ENCODE measurements at regions of chr3 and their contacts with region 1.

Region 1: GRCh38 chr3:149042789-149043386 is 43.4 kb downstream of the HLTF start:
- DNase-seq: no peak
- H3K4me3 ChIP-seq: no peak overlapping the region
- H3K27ac ChIP-seq: no peak overlapping the region
- H3K4me1 ChIP-seq: no peaks in the 10 kb centered on the region
- CTCF ChIP-seq: no peak

Region 2: DNA sequence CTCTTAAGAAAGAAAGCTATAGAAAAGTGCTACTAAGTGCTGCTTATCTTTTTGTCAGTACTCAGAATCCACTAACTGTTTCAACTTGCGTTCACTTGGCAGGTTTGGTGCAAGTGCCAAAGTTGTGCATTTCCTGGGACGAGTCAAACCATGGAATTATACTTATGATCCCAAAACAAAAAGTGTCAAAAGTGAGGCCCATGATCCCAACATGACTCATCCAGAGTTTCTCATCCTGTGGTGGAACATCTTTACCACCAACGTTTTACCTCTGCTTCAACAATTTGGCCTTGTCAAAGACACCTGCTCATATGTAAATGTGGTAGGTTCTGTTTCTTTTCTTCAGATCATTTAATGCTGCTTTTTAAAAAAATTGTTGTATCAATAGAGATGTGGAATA is 18.9 kb before region 1 on chr3:
- CTCF ChIA-PET with region 1: no interaction called
- POLR2A ChIA-PET with region 1: interaction called, 11 read pairs
- intact Hi-C with region 1: no loop called
- DNase-seq: peak; percentile 10
- H3K4me3 ChIP-seq: no peak overlapping the region
- H3K27ac ChIP-seq: no peak overlapping the region
- H3K4me1 ChIP-seq: no peaks in the 10 kb centered on the region
- CTCF ChIP-seq: no peak

Region 3: DNA sequence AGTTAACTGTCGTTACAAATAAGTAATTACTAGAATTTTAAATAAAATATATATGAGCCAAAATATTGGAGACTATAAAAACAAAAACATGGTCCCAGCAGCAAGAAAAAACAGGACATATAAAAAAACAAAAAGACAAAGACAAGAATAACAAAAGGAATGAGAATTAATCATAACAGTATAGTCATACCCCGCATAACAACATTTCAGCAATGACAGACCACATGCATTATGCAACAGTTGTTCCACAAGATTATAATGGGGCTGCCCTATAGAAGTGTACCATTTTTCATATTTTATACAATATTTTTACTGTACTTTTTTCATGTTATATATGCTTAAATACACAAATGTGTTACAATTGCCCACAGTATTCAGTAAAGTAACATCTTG is 37.8 kb after region 1 on chr3:
- CTCF ChIA-PET with region 1: no interaction called
- POLR2A ChIA-PET with region 1: interaction called, 5 read pairs
- intact Hi-C with region 1: loop called (anchors 2 kb)
- DNase-seq: no peak
- H3K4me3 ChIP-seq: no peak overlapping the region
- H3K27ac ChIP-seq: no peak overlapping the region
- H3K4me1 ChIP-seq: peaks cover 36% of the 10 kb centered on the region
- CTCF ChIP-seq: no peak

Measured in OCI-LY7 (cell line).